T-cell (primary cell): ENCODE measurements at regions of chr11 and their contacts with region 1.

Region 1: DNA sequence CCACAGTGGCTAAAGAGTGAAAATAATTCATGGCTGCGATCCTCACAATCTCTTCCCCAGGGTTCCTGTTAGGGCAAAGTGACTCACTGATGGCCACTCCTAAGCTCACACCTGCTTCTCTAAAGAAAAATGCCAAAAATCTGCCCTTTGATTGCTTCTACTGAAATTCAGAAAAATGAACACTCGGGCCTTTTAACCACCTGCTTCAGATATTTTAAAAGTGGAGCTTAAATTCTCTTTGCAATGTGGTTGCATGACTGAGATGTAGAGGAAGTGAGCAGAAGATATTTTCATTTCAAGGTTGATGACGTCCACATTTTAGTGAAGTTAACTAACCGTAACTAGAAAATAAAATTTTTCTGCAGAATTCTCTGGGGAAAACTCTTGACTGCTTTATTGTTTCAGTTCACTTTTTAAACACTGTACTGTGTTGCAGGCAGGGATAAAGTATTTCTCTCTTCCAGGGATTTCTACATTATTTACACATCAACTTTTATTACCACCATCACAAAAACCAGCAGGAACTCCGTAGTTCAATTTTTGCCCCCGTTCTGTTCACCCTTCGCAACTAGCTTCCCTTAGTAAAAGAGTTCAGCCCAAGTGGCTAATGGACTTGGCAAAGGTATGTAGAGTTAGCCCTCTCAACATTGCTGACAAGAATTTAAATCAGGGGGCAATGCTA is 8.5 kb downstream of the RAB30 start:
- DNase-seq: peak in 2 of 35 experiments; percentile 12 to 48
- ATAC-seq: peak; percentile 69 to 92 (median 82)
- H3K4me3 ChIP-seq: peak overlapping the region; percentile 6 to 34
- H3K4me3 Mint-ChIP-seq: peak overlapping the region; percentile 73 to 81 (median 80)
- H3K27ac ChIP-seq: peak overlapping the region; percentile 69
- H3K27ac Mint-ChIP-seq: peak overlapping the region; percentile 97 to 98
- H3K4me1 ChIP-seq: peaks cover 15 to 17% of the 10 kb centered on the region in 2 experiments
- H3K4me1 Mint-ChIP-seq: peaks cover 54 to 62% (median 56%) of the 10 kb centered on the region in 3 donors
- H3K27me3 ChIP-seq: no peaks in the 10 kb centered on the region
- H3K27me3 Mint-ChIP-seq: no peaks in the 10 kb centered on the region

Region 2: GRCh38 chr11:83087035-83087434 is 23.8 kb after region 1 on chr11:
- CTCF ChIA-PET with region 1: no interaction called
- POLR2A ChIA-PET with region 1: interaction called, 3 to 10 read pairs
- DNase-seq: no peak
- ATAC-seq: no peak
- H3K4me3 ChIP-seq: no peak overlapping the region
- H3K4me3 Mint-ChIP-seq: no peak overlapping the region
- H3K27ac ChIP-seq: no peak overlapping the region
- H3K27ac Mint-ChIP-seq: peak overlapping the region in 1 of 2 donors; percentile 10
- H3K4me1 ChIP-seq: no peaks in the 10 kb centered on the region
- H3K4me1 Mint-ChIP-seq: peaks cover 21 to 28% (median 25%) of the 10 kb centered on the region in 3 donors
- H3K27me3 ChIP-seq: no peaks in the 10 kb centered on the region
- H3K27me3 Mint-ChIP-seq: no peaks in the 10 kb centered on the region